Mammary epithelial cell (primary cell): ENCODE measurements at regions of chr12 and their contacts with region 1.

Region 1: GRCh38 chr12:57583008-57583831 is 7.8 kb upstream of the PIP4K2C start:
- DNase-seq: peak; percentile 44
- H3K4me3 ChIP-seq: no peak overlapping the region
- H3K27ac ChIP-seq: no peak overlapping the region
- H3K4me1 ChIP-seq: no peaks in the 10 kb centered on the region
- H3K27me3 ChIP-seq: no peaks in the 10 kb centered on the region
- CTCF ChIP-seq: peak; percentile 93 to 95

Region 2: GRCh38 chr12:57520053-57520871 is 63.0 kb before region 1 on chr12 and contains the start of gene DDIT3:
- CTCF ChIA-PET with region 1: no interaction called
- dilution Hi-C with region 1: loop called (anchors 5 kb)
- in situ Hi-C with region 1: no loop called
- intact Hi-C with region 1: no loop called
- DNase-seq: peak; percentile 97
- H3K4me3 ChIP-seq: peak within 1 kb of the TSS; percentile 57 to 83 (median 78)
- H3K27ac ChIP-seq: peak within 1 kb of the TSS; percentile 89
- H3K4me1 ChIP-seq: peaks cover 55% of the 10 kb centered on the region
- H3K27me3 ChIP-seq: no peaks in the 10 kb centered on the region
- CTCF ChIP-seq: no peak
- total RNA-seq, gene DDIT3: 28.3 to 66.1 TPM

Region 3: GRCh38 chr12:57621497-57622292 is 38.5 kb after region 1 on chr12:
- CTCF ChIA-PET with region 1: interaction called, 4 read pairs
- dilution Hi-C with region 1: loop called (anchors 5 kb)
- in situ Hi-C with region 1: loop called in 1 of 2 experiments (anchors 5 kb)
- intact Hi-C with region 1: loop called (anchors 1 kb)
- DNase-seq: no peak
- H3K4me3 ChIP-seq: peak overlapping the region; percentile 4 to 44 (median 37)
- H3K27ac ChIP-seq: no peak overlapping the region
- H3K4me1 ChIP-seq: peaks cover 7% of the 10 kb centered on the region
- H3K27me3 ChIP-seq: peaks cover 11% of the 10 kb centered on the region
- CTCF ChIP-seq: peak; percentile 79 to 92

Region 4: GRCh38 chr12:57632694-57633477 is 49.7 kb after region 1 on chr12 and contains the start of gene B4GALNT1:
- CTCF ChIA-PET with region 1: interaction called, 10 read pairs
- dilution Hi-C with region 1: loop called (anchors 5 kb)
- in situ Hi-C with region 1: no loop called
- intact Hi-C with region 1: loop called (anchors 1 kb)
- DNase-seq: peak; percentile 47
- H3K4me3 ChIP-seq: peak within 1 kb of the TSS; percentile 61 to 69 (median 66)
- H3K27ac ChIP-seq: no peak within 1 kb of the TSS
- H3K4me1 ChIP-seq: peaks cover 20% of the 10 kb centered on the region
- H3K27me3 ChIP-seq: peaks cover 2% of the 10 kb centered on the region
- CTCF ChIP-seq: peak; percentile 66 to 83
- total RNA-seq, gene B4GALNT1: 8.0 to 13.4 TPM

Region 5: GRCh38 chr12:57693659-57694458 is 110.6 kb after region 1 on chr12 and contains the start of gene OS9:
- CTCF ChIA-PET with region 1: no interaction called
- dilution Hi-C with region 1: no loop called
- in situ Hi-C with region 1: no loop called
- intact Hi-C with region 1: loop called (anchors 1 kb)
- DNase-seq: peak; percentile 100
- H3K4me3 ChIP-seq: peak within 1 kb of the TSS; percentile 88 to 94 (median 93)
- H3K27ac ChIP-seq: peak within 1 kb of the TSS; percentile 53
- H3K4me1 ChIP-seq: peaks cover 8% of the 10 kb centered on the region
- H3K27me3 ChIP-seq: no peaks in the 10 kb centered on the region
- CTCF ChIP-seq: peak; percentile 80
- total RNA-seq, gene OS9: 111 to 145 TPM

Region 6: DNA sequence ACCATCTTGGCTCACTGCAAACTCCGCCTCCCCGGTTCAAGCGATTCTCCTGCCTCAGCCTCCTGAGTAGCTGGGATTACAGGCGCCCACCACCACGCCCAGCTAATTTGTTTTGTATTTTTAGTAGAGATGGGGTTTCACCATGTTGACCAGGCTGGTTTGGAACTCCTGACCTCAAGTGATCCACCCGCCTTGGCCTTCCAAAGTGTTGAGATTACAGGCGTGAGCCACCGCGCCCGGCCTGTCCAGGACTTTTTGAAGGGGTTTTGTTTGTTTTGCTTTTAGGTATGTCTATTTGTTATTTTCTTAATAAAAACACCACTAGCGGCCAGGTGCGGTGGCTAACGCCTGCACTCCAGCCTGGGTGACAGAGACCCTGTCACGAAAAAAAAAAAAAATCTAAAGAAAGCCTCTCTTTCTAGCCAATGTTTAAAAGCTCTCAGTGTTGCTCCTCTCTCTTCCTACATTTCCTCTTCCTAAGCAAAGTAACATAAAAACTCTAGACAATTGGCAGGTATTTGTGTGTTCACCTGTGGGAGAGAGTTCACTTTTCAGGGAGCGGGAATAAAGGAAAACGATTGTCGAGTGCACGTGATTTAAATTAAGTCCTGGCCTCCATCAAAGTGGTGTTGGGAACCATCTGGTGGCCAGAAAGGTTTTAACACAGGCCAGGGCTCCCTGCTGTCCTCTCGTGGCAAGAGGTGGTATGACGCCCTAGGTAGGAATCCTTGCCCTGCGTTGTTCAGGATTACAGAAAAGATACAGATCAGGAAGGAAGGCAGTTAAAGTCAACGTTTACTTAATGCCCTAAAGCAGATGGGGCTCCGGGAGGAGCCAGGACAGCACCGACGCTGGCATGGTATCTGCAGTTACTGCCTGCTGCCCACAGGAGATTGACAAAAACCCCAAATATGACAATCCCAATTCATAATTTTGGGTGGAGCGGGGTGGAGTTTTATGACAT is 321.9 kb after region 1 on chr12:
- CTCF ChIA-PET with region 1: no interaction called
- dilution Hi-C with region 1: no loop called
- in situ Hi-C with region 1: no loop called
- intact Hi-C with region 1: loop called (anchors 5 kb)
- DNase-seq: peak; percentile 73
- H3K4me3 ChIP-seq: no peak overlapping the region
- H3K27ac ChIP-seq: no peak overlapping the region
- H3K4me1 ChIP-seq: no peaks in the 10 kb centered on the region
- H3K27me3 ChIP-seq: no peaks in the 10 kb centered on the region
- CTCF ChIP-seq: peak; percentile 100